H1 (cell line): ENCODE measurements at regions of chr18 and their contacts with region 1.

Region 1: GRCh38 chr18:7177116-7177744 is 53.7 kb upstream of the LRRC30 start:
- DNase-seq: no peak
- H3K4me3 ChIP-seq: no peak overlapping the region
- H3K27ac ChIP-seq: no peak overlapping the region
- H3K4me1 ChIP-seq: no peaks in the 10 kb centered on the region
- H3K27me3 ChIP-seq: no peaks in the 10 kb centered on the region
- CTCF ChIP-seq: peak; percentile 45 to 84 (median 81)
- EP300 ChIP-seq: no peak
- POLR2A ChIP-seq: no peak
- RAD21 ChIP-seq: peak; percentile 92 to 95

Region 2: DNA sequence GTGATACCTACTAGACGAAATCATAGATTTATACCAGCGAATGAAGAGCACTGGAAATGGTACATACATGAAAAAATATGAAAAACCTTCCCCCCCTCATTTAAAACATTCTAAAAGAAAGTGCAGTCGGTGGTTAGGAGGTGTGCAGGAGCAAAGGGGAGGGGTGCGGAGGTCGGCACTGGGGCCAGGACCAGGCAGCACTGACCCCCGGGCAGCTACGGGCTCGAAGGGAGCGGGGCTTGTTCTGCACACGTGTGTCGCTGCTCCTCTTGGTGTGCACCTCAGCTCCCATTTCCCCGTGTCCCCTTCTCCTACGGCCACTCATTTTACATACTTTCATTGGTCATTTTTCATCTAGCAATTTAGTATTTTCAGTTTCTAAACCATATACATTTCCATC is 148.6 kb before region 1 on chr18:
- CTCF ChIA-PET with region 1: interaction called, 25 read pairs
- POLR2A ChIA-PET with region 1: no interaction called
- DNase-seq: no peak
- H3K4me3 ChIP-seq: no peak overlapping the region
- H3K27ac ChIP-seq: no peak overlapping the region
- H3K4me1 ChIP-seq: no peaks in the 10 kb centered on the region
- H3K27me3 ChIP-seq: no peaks in the 10 kb centered on the region
- CTCF ChIP-seq: no peak
- EP300 ChIP-seq: no peak
- POLR2A ChIP-seq: no peak
- RAD21 ChIP-seq: no peak

Region 3: GRCh38 chr18:7038330-7038851 is 138.8 kb before region 1 on chr18:
- CTCF ChIA-PET with region 1: interaction called, 64 read pairs
- POLR2A ChIA-PET with region 1: interaction called, 3 read pairs
- DNase-seq: peak; percentile 29 to 93
- H3K4me3 ChIP-seq: no peak overlapping the region
- H3K27ac ChIP-seq: no peak overlapping the region
- H3K4me1 ChIP-seq: 0 out of 7 replicates have a peak, but pooled peaks cover 0 to 2% (median 0%) of the 10 kb centered on the region in 4 experiments
- H3K27me3 ChIP-seq: no peaks in the 10 kb centered on the region
- CTCF ChIP-seq: peak; percentile 89 to 97 (median 93)
- EP300 ChIP-seq: no peak
- POLR2A ChIP-seq: no peak
- RAD21 ChIP-seq: peak; percentile 90 to 92

Region 4: DNA sequence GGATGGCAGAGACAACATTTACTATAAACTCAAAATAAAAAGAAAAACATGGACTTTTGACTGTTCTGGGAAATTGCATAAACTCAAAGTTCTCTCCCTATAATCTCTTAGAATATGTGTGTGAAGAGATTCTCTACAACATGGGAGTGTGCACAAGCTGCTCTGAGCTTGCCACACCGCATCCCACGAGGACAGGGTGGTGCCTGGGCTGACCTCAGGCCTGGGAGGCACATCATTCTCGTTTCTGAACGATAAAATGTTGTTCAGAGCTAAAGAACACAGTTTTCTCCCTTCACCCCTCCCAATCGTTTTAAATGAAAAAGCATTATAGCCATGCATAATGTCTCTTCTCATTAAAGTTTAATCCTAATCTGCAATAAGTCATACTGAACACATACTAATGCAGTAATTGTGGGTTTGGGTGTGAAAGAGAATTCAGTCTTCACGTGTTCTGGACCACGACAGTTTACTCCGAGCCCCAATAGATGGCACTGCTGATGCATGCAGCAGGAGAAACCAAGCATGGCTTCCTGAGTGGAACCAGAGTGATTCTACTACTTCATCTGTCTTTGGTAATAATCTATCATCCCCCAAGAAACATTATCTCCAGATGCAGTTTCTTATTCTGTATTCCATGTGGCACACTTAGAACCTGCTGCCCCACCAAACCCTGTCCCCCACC is 12.8 kb before region 1 on chr18:
- CTCF ChIA-PET with region 1: interaction called, 83 read pairs
- POLR2A ChIA-PET with region 1: no interaction called
- DNase-seq: peak in 1 of 2 experiments; percentile 40
- H3K4me3 ChIP-seq: no peak overlapping the region
- H3K27ac ChIP-seq: no peak overlapping the region
- H3K4me1 ChIP-seq: no peaks in the 10 kb centered on the region
- H3K27me3 ChIP-seq: no peaks in the 10 kb centered on the region
- CTCF ChIP-seq: peak; percentile 45 to 55 (median 53)
- EP300 ChIP-seq: no peak
- POLR2A ChIP-seq: no peak
- RAD21 ChIP-seq: peak; percentile 57 to 58